ENCODE measurements at regions of chr11 and their contacts with region 1.

Region 1: DNA sequence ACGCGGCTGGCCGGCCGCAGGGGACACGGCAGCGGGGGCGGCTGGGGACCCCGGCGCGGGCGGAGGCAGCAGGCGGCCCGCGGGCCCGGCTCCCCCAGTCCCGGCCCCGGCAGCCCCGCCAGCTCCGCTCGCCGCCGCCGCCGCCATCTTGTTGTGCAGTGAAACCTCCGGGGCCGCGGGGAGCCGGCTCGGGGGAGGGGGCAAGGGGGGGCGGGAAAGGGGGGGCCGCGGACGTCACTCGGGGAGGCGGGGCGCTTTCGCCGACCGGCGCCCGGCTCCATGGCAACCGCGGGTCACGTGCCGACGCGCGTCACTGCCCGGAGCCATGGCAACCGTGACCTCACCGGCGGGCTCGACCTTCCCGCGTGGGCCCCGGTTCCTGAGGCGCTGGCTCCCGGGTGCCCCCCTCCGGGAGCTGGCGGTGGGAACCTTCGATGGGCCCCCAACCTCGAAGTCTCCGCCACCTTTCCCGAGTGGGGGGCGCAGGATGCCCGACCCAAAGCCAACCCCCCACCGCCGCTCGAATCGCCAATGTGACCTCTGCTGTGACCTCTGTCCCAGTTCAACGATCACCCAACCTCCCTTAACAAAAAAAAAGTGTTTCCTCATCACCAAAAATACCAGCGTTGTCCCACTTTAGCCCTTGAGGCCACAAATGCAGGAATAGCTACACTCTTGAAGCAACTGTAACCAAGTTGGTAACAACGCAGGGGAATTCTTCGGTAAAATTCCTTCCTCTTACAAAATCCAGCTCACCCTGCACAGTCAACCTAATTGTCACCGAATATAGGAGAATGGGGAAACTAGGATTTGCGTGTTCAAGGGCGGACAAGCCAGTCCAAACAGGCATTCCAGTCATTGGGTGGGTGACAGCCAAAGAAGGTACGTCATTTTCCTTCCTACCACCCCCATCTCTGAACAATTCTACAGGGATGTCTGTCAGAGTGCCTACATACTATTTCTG is at the start of gene SIK3:
- ATAC-seq: peak; percentile 76 to 91 (median 87)
- H3K4me3 ChIP-seq: peak within 1 kb of the TSS; percentile 84 to 99 (median 96)
- H3K27ac ChIP-seq: peak within 1 kb of the TSS; percentile 90 to 95
- H3K4me1 ChIP-seq: peaks cover 26 to 34% of the 10 kb centered on the region in 2 donors
- total RNA-seq, gene SIK3: 12.7 to 34.3 (median 16.5) TPM

Region 2: GRCh38 chr11:115911613-115912346 is 1186.8 kb before region 1 on chr11:
- in situ Hi-C with region 1: no loop called
- ATAC-seq: peak in 5 of 8 experiments; percentile 22 to 75 (median 64)
- H3K4me3 ChIP-seq: no peak overlapping the region
- H3K27ac ChIP-seq: no peak overlapping the region
- H3K4me1 ChIP-seq: peaks cover 5 to 10% of the 10 kb centered on the region in 2 donors

Region 3: GRCh38 chr11:116986521-116987105 is 111.9 kb before region 1 on chr11:
- in situ Hi-C with region 1: loop called in 1 of 9 experiments (anchors 25 kb)
- ATAC-seq: peak in 2 of 8 experiments; percentile 35 to 55
- H3K4me3 ChIP-seq: no peak overlapping the region
- H3K27ac ChIP-seq: no peak overlapping the region
- H3K4me1 ChIP-seq: peaks cover 12 to 20% of the 10 kb centered on the region in 2 donors

Region 4: GRCh38 chr11:117734601-117735024 is 636.1 kb after region 1 on chr11:
- in situ Hi-C with region 1: no loop called
- ATAC-seq: peak in 5 of 8 experiments; percentile 36 to 57 (median 55)
- H3K4me3 ChIP-seq: no peak overlapping the region
- H3K27ac ChIP-seq: no peak overlapping the region
- H3K4me1 ChIP-seq: peaks cover 11 to 33% of the 10 kb centered on the region in 2 donors

Measured in motor neuron (in vitro differentiated cells).